Kidney (tissue), 22 donors: ENCODE measurements at regions of chr1 and their contacts with region 1.

Region 1: GRCh38 chr1:179091691-179092165 is 9.9 kb downstream of the TOR3A start:
- DNase-seq: peak in 4 of 5 donors; percentile 17 to 79 (median 28)
- H3K4me3 ChIP-seq: no peak overlapping the region
- H3K27ac ChIP-seq: no peak overlapping the region
- H3K4me1 ChIP-seq: peaks cover 0 to 15% (median 8%) of the 10 kb centered on the region in 3 donors
- H3K27me3 ChIP-seq: no peaks in the 10 kb centered on the region
- CTCF ChIP-seq: no peak

Region 2: GRCh38 chr1:179365320-179366092 is 273.8 kb after region 1 on chr1 and contains the start of gene AXDND1:
- intact Hi-C with region 1: loop called (anchors 10 kb)
- DNase-seq: peak; percentile 86 to 96 (median 94)
- H3K4me3 ChIP-seq: peak within 1 kb of the TSS; percentile 91 to 94 (median 94)
- H3K27ac ChIP-seq: peak within 1 kb of the TSS; percentile 95 to 96
- H3K4me1 ChIP-seq: no peaks in the 10 kb centered on the region
- H3K27me3 ChIP-seq: no peaks in the 10 kb centered on the region
- CTCF ChIP-seq: peak; percentile 19
- total RNA-seq, gene AXDND1: 0.57 TPM